Cardiac septum (tissue), 1 donor: ENCODE measurements at regions of chr14 and their contacts with region 1.

Region 1: DNA sequence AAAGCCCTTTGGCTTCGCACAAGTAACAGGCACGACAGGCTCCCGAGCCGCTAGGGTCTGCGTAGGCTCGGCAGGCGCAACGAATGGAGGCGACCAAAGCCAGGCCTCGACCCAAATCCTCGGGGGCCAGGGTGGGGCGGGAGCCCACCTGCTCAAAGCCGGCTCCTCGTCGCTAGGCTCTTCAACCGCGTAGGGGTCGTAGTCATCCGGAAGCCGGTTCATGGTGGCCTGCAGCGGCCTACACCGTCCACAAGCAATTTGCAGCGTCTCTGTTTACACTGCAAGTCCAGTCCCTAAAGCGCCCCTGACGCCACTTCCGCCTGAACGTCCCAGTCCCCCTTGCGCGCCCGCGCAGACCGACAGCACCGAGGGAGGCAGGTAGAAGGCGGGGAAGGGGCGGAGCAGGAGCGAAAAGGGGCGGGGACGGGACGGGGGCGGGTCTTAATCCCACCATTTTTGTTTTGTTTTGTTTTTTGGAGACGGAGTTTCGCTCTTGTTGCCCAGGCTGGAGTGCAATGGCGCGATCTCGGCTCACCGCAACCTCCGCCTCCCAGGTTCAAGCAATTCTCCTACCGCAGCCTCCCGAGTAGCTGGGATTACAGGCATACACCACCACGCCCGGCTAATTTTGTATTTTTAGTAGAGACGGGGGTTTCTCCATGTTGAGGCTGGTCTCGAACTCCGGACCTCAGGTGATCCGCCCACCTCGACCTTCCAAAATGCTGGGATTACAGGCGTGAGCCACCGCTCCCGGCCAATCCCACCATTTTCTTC is at the start of gene EAPP:
- DNase-seq: peak; percentile 100
- total RNA-seq, gene EAPP: 17.1 TPM

Region 2: GRCh38 chr14:34461334-34462131 is 78.1 kb before region 1 on chr14:
- intact Hi-C with region 1: loop called (anchors 5 kb)
- DNase-seq: no peak